Panc1 (cell line): ENCODE measurements at regions of chr9 and their contacts with region 1.

Region 1: GRCh38 chr9:72871685-72872084 is 81.2 kb downstream of the ALDH1A1 start:
- DNase-seq: no peak
- ATAC-seq: no peak
- H3K4me3 ChIP-seq: no peak overlapping the region
- H3K27ac ChIP-seq: no peak overlapping the region
- H3K4me1 ChIP-seq: no peaks in the 10 kb centered on the region
- H3K27me3 ChIP-seq: no peaks in the 10 kb centered on the region
- CTCF ChIP-seq: peak; percentile 37; the same call in 1 of the 2 replicates

Region 2: GRCh38 chr9:72925126-72925789 is 53.6 kb after region 1 on chr9:
- CTCF ChIA-PET with region 1: no interaction called
- POLR2A ChIA-PET with region 1: interaction called, 15 read pairs
- in situ Hi-C with region 1: no loop called
- intact Hi-C with region 1: no loop called
- DNase-seq: no peak
- ATAC-seq: no peak
- H3K4me3 ChIP-seq: no peak overlapping the region
- H3K27ac ChIP-seq: no peak overlapping the region
- H3K4me1 ChIP-seq: no peaks in the 10 kb centered on the region
- H3K27me3 ChIP-seq: no peaks in the 10 kb centered on the region
- CTCF ChIP-seq: no peak

Region 3: GRCh38 chr9:72971411-72971810 is 99.7 kb after region 1 on chr9:
- CTCF ChIA-PET with region 1: no interaction called
- POLR2A ChIA-PET with region 1: no interaction called
- in situ Hi-C with region 1: no loop called
- intact Hi-C with region 1: no loop called
- DNase-seq: no peak
- ATAC-seq: no peak
- H3K4me3 ChIP-seq: no peak overlapping the region
- H3K27ac ChIP-seq: no peak overlapping the region
- H3K4me1 ChIP-seq: no peaks in the 10 kb centered on the region
- H3K27me3 ChIP-seq: no peaks in the 10 kb centered on the region
- CTCF ChIP-seq: no peak

Region 4: GRCh38 chr9:73023025-73023541 is 151.4 kb after region 1 on chr9:
- CTCF ChIA-PET with region 1: interaction called, 7 read pairs
- POLR2A ChIA-PET with region 1: no interaction called
- in situ Hi-C with region 1: no loop called
- intact Hi-C with region 1: loop called (anchors 2 kb)
- DNase-seq: peak; percentile 25
- ATAC-seq: no peak
- H3K4me3 ChIP-seq: no peak overlapping the region
- H3K27ac ChIP-seq: no peak overlapping the region
- H3K4me1 ChIP-seq: no peaks in the 10 kb centered on the region
- H3K27me3 ChIP-seq: no peaks in the 10 kb centered on the region
- CTCF ChIP-seq: peak; percentile 78

Region 5: GRCh38 chr9:73081979-73082657 is 210.4 kb after region 1 on chr9:
- CTCF ChIA-PET with region 1: no interaction called
- POLR2A ChIA-PET with region 1: no interaction called
- in situ Hi-C with region 1: no loop called
- intact Hi-C with region 1: loop called (anchors 5 kb)
- DNase-seq: no peak
- ATAC-seq: no peak
- H3K4me3 ChIP-seq: no peak overlapping the region
- H3K27ac ChIP-seq: no peak overlapping the region
- H3K4me1 ChIP-seq: no peaks in the 10 kb centered on the region; the same call in 1 of the 2 replicates
- H3K27me3 ChIP-seq: no peaks in the 10 kb centered on the region
- CTCF ChIP-seq: peak; percentile 73; the same call in 1 of the 2 replicates